ENCODE measurements at regions of chr17 and their contacts with region 1.

Region 1: DNA sequence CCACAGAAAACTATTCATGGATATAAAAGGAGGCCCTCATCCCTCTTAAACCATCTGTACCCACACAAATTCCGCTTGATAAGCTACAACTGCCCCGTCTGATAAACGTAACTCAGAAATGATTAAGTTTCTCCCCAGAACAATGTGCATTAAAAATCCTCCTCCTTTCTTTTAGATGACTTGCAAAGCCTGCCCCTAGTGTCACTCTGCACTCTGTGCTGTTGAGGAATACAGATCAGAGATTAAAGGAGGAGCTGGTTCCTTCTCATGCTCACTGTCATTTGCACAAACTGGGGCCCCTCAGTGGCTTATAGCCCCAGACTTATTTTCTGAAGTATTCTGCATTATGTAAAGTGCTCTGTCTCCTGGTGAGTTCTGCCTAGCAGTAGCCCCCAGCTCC is 33.3 kb downstream of the CDRT15 start:
- DNase-seq: peak in 11 of 14 experiments; percentile 30 to 74 (median 44)
- ATAC-seq: peak; percentile 45
- H3K4me3 ChIP-seq: no peak overlapping the region
- H3K4me3 Mint-ChIP-seq: peak overlapping the region; percentile 66
- H3K27ac ChIP-seq: peak overlapping the region; percentile 78 to 79
- H3K27ac Mint-ChIP-seq: peak overlapping the region; percentile 94
- H3K4me1 ChIP-seq: peaks cover 86% of the 10 kb centered on the region
- H3K4me1 Mint-ChIP-seq: peaks cover 86% of the 10 kb centered on the region
- H3K27me3 ChIP-seq: no peaks in the 10 kb centered on the region
- H3K27me3 Mint-ChIP-seq: no peaks in the 10 kb centered on the region
- CTCF ChIP-seq: peak; percentile 58

Region 2: DNA sequence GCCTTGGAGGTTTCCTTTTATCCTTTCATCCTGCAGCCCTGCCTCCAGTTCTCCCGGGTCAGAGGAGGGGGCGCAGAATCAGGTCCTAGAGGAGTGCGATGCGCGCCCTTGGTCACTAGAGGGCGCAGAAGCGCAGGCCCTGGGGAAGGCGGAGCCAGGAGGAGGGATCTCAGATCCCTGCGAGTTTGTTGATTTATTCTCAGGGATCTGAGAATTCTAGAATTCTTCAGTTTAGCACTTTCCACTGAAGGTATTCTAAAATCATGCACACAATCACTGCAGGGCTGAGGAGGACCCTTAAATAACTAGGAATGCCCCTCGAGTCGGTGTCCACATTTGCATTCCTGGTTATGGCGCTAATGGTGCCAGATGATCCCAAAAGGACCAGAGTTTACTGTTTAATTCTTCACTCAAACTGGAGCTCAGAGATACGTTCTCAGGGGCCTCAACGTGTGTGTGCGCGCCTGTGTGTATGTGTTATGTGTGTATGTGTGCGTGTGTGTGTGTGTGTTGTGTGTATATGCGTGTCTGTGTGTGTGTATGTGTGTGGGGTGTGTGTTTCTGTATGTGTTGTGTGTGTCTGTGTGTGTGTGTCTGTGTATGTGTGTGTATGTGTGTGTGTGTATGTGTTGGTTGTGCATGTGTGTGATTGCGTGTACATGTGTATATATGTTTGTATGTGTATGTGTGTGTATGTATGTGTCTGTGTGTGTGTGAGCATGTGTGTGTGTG is 1178.7 kb before region 1 on chr17:
- CTCF ChIA-PET with region 1: no interaction called
- POLR2A ChIA-PET with region 1: no interaction called
- intact Hi-C with region 1: loop called in 1 of 2 experiments (anchors 10 kb)
- DNase-seq: peak; percentile 39 to 82 (median 54)
- ATAC-seq: peak; percentile 100
- H3K4me3 ChIP-seq: peak overlapping the region; percentile 16
- H3K4me3 Mint-ChIP-seq: no peak overlapping the region
- H3K27ac ChIP-seq: no peak overlapping the region
- H3K27ac Mint-ChIP-seq: no peak overlapping the region
- H3K4me1 ChIP-seq: peaks cover 9% of the 10 kb centered on the region
- H3K4me1 Mint-ChIP-seq: peaks cover 6% of the 10 kb centered on the region
- H3K27me3 ChIP-seq: no peaks in the 10 kb centered on the region
- H3K27me3 Mint-ChIP-seq: peaks cover 17% of the 10 kb centered on the region
- CTCF ChIP-seq: peak; percentile 98

Region 3: DNA sequence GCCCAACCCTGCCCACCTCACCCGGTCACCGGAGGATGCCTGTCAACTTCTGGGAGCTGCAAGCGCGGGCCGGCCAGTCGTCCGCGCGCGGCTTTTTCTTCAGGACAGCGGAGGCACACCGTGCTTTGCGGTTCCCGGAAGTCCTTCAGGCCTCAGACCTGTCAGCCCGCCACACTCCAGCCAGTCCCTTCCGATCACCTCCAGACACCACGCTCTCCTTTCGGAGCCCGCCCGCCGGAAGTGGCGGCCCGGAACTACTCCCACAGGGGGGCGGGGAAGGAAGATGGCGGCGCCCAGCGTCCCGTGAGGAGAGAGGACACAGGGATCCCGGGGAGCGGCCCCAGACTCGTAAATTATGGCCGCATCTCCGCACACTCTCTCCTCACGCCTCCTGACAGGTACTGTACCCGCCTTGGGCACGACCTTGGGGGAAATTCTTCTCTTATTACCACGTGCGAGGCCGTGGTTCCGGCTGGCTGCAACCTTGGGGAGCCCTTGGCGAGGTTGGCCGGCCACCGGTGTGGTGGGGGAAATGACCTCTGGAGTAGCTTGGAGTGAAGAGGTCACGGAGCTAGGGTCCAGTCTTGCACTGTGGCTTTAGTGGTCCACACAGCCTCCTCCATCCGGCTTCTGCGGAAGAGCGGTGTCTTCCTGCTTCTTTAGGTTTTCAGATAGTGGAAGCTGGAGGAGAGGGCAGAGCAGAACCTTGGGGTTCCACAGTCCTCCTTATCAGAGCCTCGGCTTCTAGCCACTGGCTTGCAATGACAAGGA is 134.0 kb before region 1 on chr17 and contains the start of gene COX10:
- CTCF ChIA-PET with region 1: no interaction called
- POLR2A ChIA-PET with region 1: interaction called, 3 read pairs
- intact Hi-C with region 1: loop called (anchors 1 to 2 kb)
- DNase-seq: peak; percentile 68 to 88 (median 80)
- ATAC-seq: peak; percentile 99
- H3K4me3 ChIP-seq: peak within 1 kb of the TSS; percentile 89
- H3K4me3 Mint-ChIP-seq: peak within 1 kb of the TSS; percentile 97
- H3K27ac ChIP-seq: peak within 1 kb of the TSS; percentile 57 to 68
- H3K27ac Mint-ChIP-seq: peak within 1 kb of the TSS; percentile 92
- H3K4me1 ChIP-seq: peaks cover 22% of the 10 kb centered on the region
- H3K4me1 Mint-ChIP-seq: peaks cover 61% of the 10 kb centered on the region
- H3K27me3 ChIP-seq: no peaks in the 10 kb centered on the region
- H3K27me3 Mint-ChIP-seq: no peaks in the 10 kb centered on the region
- CTCF ChIP-seq: no peak
- total RNA-seq, gene COX10: 9.1 to 9.9 TPM

Region 4: GRCh38 chr17:14118951-14119350 is 84.4 kb before region 1 on chr17:
- CTCF ChIA-PET with region 1: interaction called, 4 read pairs
- POLR2A ChIA-PET with region 1: no interaction called
- intact Hi-C with region 1: loop called (anchors 5 kb)
- DNase-seq: peak in 2 of 14 experiments; percentile 13 to 19
- ATAC-seq: peak; percentile 75
- H3K4me3 ChIP-seq: no peak overlapping the region
- H3K4me3 Mint-ChIP-seq: no peak overlapping the region
- H3K27ac ChIP-seq: peak overlapping the region in 1 of 2 donors; percentile 24
- H3K27ac Mint-ChIP-seq: peak overlapping the region; percentile 58
- H3K4me1 ChIP-seq: peaks cover 10% of the 10 kb centered on the region
- H3K4me1 Mint-ChIP-seq: peaks cover 88% of the 10 kb centered on the region
- H3K27me3 ChIP-seq: no peaks in the 10 kb centered on the region
- H3K27me3 Mint-ChIP-seq: no peaks in the 10 kb centered on the region
- CTCF ChIP-seq: no peak

Region 5: GRCh38 chr17:14228903-14229302 is 25.5 kb after region 1 on chr17:
- CTCF ChIA-PET with region 1: no interaction called
- POLR2A ChIA-PET with region 1: no interaction called
- intact Hi-C with region 1: no loop called
- DNase-seq: no peak
- ATAC-seq: no peak
- H3K4me3 ChIP-seq: no peak overlapping the region
- H3K4me3 Mint-ChIP-seq: no peak overlapping the region
- H3K27ac ChIP-seq: no peak overlapping the region
- H3K27ac Mint-ChIP-seq: no peak overlapping the region
- H3K4me1 ChIP-seq: no peaks in the 10 kb centered on the region
- H3K4me1 Mint-ChIP-seq: no peaks in the 10 kb centered on the region
- H3K27me3 ChIP-seq: no peaks in the 10 kb centered on the region
- H3K27me3 Mint-ChIP-seq: no peaks in the 10 kb centered on the region
- CTCF ChIP-seq: no peak

Region 6: DNA sequence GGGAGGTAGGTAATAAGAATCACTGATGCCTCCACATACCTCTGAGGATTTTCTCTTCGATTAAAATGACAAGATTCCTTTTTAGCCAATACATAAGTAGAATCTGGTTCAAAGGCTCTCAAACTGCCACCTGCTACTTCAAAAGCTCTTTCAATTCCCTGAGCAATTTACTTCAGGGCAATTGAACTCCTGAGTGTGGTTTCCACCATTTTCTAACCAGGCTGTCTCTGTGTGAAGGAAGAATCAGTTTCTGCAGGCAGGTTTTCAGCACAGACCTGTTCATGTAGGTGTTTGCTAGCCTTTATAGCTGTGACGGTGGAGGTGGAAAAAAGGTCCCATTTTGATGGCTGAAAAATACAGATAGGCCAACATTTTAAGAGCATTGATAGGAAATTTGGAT is 79.3 kb after region 1 on chr17:
- CTCF ChIA-PET with region 1: no interaction called
- POLR2A ChIA-PET with region 1: no interaction called
- intact Hi-C with region 1: no loop called
- DNase-seq: no peak
- ATAC-seq: no peak
- H3K4me3 ChIP-seq: no peak overlapping the region
- H3K4me3 Mint-ChIP-seq: no peak overlapping the region
- H3K27ac ChIP-seq: no peak overlapping the region
- H3K27ac Mint-ChIP-seq: no peak overlapping the region
- H3K4me1 ChIP-seq: no peaks in the 10 kb centered on the region
- H3K4me1 Mint-ChIP-seq: no peaks in the 10 kb centered on the region
- H3K27me3 ChIP-seq: peaks cover 7 to 14% of the 10 kb centered on the region in 2 experiments
- H3K27me3 Mint-ChIP-seq: peaks cover 10% of the 10 kb centered on the region
- CTCF ChIP-seq: no peak

Region 7: GRCh38 chr17:14427900-14428647 is 224.7 kb after region 1 on chr17:
- CTCF ChIA-PET with region 1: no interaction called
- POLR2A ChIA-PET with region 1: interaction called, 14 read pairs
- intact Hi-C with region 1: no loop called
- DNase-seq: peak in 13 of 14 experiments; percentile 15 to 86 (median 47)
- ATAC-seq: peak; percentile 99
- H3K4me3 ChIP-seq: peak overlapping the region; percentile 52
- H3K4me3 Mint-ChIP-seq: peak overlapping the region; percentile 71
- H3K27ac ChIP-seq: peak overlapping the region; percentile 68 to 74
- H3K27ac Mint-ChIP-seq: peak overlapping the region; percentile 93
- H3K4me1 ChIP-seq: peaks cover 47% of the 10 kb centered on the region
- H3K4me1 Mint-ChIP-seq: peaks cover 58% of the 10 kb centered on the region
- H3K27me3 ChIP-seq: no peaks in the 10 kb centered on the region
- H3K27me3 Mint-ChIP-seq: no peaks in the 10 kb centered on the region
- CTCF ChIP-seq: no peak

Measured in CD4-positive, alpha-beta T cell (primary cell).